Ovary (tissue), 10 donors: ENCODE measurements at regions of chr1 and their contacts with region 1.

Region 1: DNA sequence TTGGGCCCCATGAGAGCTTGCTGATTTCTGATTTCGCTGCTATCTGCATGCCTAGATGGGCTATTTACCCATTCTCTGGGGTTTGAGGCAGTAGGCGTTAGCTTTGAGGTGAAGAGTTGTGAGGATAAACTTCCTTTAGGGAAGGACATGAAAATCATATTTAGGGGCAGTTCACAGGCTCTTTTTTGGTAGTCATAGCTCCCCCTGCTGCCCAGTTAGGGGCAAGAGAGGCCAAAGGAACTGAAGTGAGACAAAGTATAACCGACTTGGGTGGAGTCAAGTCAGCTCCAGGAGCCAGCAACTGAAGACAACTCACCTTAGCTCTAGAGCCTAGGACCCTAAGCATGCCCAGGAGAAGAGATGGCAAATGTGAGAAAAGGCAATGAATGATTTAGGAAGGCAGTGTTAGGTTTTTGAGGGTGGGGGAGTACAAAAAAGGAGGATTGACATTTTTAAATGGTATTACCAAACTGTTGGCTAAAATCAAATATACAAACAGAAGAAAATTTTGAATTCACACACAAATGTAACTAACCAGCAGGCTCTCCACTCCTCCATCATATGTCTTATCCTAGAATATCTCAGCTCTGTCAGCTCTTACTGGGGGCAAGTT is 625.2 kb downstream of the LMO4 start:
- DNase-seq: peak; percentile 28 to 67 (median 58)
- H3K4me3 ChIP-seq: no peak overlapping the region
- H3K27ac ChIP-seq: no peak overlapping the region
- H3K4me1 ChIP-seq: no peaks in the 10 kb centered on the region
- H3K27me3 ChIP-seq: no peaks in the 10 kb centered on the region
- CTCF ChIP-seq: peak in 2 of 3 donors; percentile 29 to 54
- EP300 ChIP-seq: no peak
- POLR2A ChIP-seq: no peak

Region 2: DNA sequence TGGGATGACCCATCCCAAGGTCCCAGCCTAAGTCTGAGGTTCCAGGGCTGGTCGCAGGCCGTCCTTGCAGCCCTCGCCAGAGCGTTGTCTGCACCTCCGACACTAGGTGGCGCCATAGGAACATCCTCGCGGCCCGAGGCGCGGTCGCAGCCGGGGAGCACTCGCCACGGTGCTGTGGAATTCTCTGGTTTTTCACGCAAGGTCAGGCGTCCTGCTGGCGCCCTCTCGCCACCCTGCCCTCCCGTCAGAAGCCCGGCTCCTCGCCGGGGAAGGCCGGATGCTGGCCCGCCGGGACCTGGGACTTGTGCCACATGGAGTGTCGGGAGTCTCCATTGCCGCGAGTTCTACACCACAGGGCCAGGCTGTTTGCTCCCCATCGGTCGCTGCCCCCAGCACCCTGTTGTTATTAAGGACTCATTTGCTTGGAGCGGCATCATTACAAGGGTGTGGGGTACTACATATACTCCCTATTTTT is 822.0 kb before region 1 on chr1:
- intact Hi-C with region 1: loop called in 1 of 4 experiments (anchors 5 kb)
- DNase-seq: peak; percentile 83 to 89 (median 86)
- H3K4me3 ChIP-seq: peak overlapping the region; percentile 50
- H3K27ac ChIP-seq: peak overlapping the region; percentile 63 to 74
- H3K4me1 ChIP-seq: no peaks in the 10 kb centered on the region
- H3K27me3 ChIP-seq: no peaks in the 10 kb centered on the region
- CTCF ChIP-seq: peak; percentile 76 to 78 (median 77)
- EP300 ChIP-seq: no peak
- POLR2A ChIP-seq: no peak

Region 3: GRCh38 chr1:87328272-87329050 is 625.4 kb before region 1 on chr1 and contains the start of gene LMO4:
- intact Hi-C with region 1: loop called in 1 of 4 experiments (anchors 5 kb)
- DNase-seq: peak; percentile 95 to 97 (median 96)
- H3K4me3 ChIP-seq: peak within 1 kb of the TSS; percentile 74
- H3K27ac ChIP-seq: peak within 1 kb of the TSS; percentile 94 to 99
- H3K4me1 ChIP-seq: peaks cover 5% of the 10 kb centered on the region
- H3K27me3 ChIP-seq: no peaks in the 10 kb centered on the region
- CTCF ChIP-seq: peak in 2 of 3 donors; percentile 10 to 32
- EP300 ChIP-seq: no peak
- POLR2A ChIP-seq: peak; percentile 73
- total RNA-seq, gene LMO4: 21.7 to 45.4 (median 35.4) TPM

Region 4: GRCh38 chr1:88029142-88029541 is 75.3 kb after region 1 on chr1:
- intact Hi-C with region 1: no loop called
- DNase-seq: no peak
- H3K4me3 ChIP-seq: no peak overlapping the region
- H3K27ac ChIP-seq: no peak overlapping the region
- H3K4me1 ChIP-seq: no peaks in the 10 kb centered on the region
- H3K27me3 ChIP-seq: no peaks in the 10 kb centered on the region
- CTCF ChIP-seq: no peak
- EP300 ChIP-seq: no peak
- POLR2A ChIP-seq: no peak